A549 (cell line): ENCODE measurements at regions of chr14 and their contacts with region 1.

Region 1: GRCh38 chr14:95561001-95561412 is 26.2 kb downstream of the GLRX5 start:
- DNase-seq: peak; percentile 78 to 88
- ATAC-seq: peak; percentile 98 to 99
- H3K4me3 ChIP-seq: no peak overlapping the region
- H3K27ac ChIP-seq: no peak overlapping the region
- H3K4me1 ChIP-seq: no peaks in the 10 kb centered on the region
- CTCF ChIP-seq: peak; percentile 98
- EP300 ChIP-seq: no peak
- POLR2A ChIP-seq: no peak
- RAD21 ChIP-seq: peak; percentile 98

Region 2: GRCh38 chr14:95547631-95548327 is 13.2 kb before region 1 on chr14:
- CTCF ChIA-PET with region 1: interaction called, 47 read pairs
- POLR2A ChIA-PET with region 1: no interaction called
- DNase-seq: no peak
- ATAC-seq: no peak
- H3K4me3 ChIP-seq: no peak overlapping the region
- H3K27ac ChIP-seq: no peak overlapping the region; a peak in 1 of 6 replicates
- H3K4me1 ChIP-seq: peaks cover 16% of the 10 kb centered on the region; the same call in 2 of the 3 replicates
- CTCF ChIP-seq: no peak
- EP300 ChIP-seq: no peak
- POLR2A ChIP-seq: no peak
- RAD21 ChIP-seq: no peak

Region 3: GRCh38 chr14:95577067-95577800 is 16.2 kb after region 1 on chr14:
- CTCF ChIA-PET with region 1: interaction called, 11 read pairs
- POLR2A ChIA-PET with region 1: no interaction called
- DNase-seq: no peak
- ATAC-seq: no peak
- H3K4me3 ChIP-seq: no peak overlapping the region
- H3K27ac ChIP-seq: no peak overlapping the region
- H3K4me1 ChIP-seq: no peaks in the 10 kb centered on the region; the same call in 2 of the 3 replicates
- CTCF ChIP-seq: no peak
- EP300 ChIP-seq: no peak
- POLR2A ChIP-seq: no peak
- RAD21 ChIP-seq: no peak

Region 4: GRCh38 chr14:95597784-95598211 is 36.8 kb after region 1 on chr14:
- CTCF ChIA-PET with region 1: no interaction called
- POLR2A ChIA-PET with region 1: no interaction called
- DNase-seq: no peak
- ATAC-seq: peak in 1 of 2 experiments; percentile 25; a peak in 1 of 6 replicates
- H3K4me3 ChIP-seq: no peak overlapping the region
- H3K27ac ChIP-seq: no peak overlapping the region
- H3K4me1 ChIP-seq: no peaks in the 10 kb centered on the region
- CTCF ChIP-seq: no peak
- EP300 ChIP-seq: no peak
- POLR2A ChIP-seq: no peak
- RAD21 ChIP-seq: no peak

Region 5: DNA sequence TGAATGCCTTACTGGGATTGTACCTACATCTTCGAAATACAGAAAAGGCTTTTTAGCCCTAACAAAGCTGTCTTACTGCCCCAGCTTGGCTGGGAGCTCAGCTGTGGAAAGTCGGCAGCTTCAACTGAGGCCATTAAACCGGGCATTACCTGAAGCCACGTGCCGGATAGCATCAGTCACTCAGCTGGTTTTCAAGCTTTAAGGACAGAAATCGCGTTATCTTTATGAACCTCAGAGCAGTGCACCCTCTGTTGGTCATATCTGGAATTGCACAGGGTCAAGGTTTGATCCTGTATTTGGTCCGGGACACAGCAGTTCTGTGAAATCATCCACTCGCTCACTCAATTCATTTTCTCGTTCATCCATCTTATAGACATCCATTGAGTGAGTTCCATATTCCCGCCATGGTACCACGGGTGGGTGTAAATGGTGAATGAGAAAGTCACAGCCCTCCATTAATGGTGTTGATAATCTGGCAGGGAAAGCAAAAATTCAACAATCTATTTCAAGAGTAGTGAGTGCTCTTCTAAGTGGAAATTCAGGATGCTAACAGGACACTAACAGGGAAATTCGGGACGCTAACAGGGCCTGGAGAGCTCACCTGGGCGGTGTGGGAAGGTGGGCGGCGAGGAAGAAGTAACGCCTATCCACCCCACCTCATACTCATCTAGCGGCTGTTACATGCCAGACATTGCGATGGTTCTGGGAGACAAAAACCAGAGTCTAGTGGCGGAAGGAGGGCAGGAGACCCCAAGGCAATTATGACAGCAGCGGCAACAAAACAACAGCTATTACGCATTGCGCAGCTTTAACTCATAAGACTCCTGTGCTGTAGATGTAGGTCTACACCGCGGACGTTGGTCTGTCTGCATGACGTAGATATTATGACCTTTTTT is 213.5 kb after region 1 on chr14:
- CTCF ChIA-PET with region 1: interaction called, 29 read pairs
- POLR2A ChIA-PET with region 1: no interaction called
- DNase-seq: peak; percentile 46 to 57
- ATAC-seq: peak; percentile 70 to 80; a peak in 3 of 6 replicates
- H3K4me3 ChIP-seq: no peak overlapping the region
- H3K27ac ChIP-seq: no peak overlapping the region
- H3K4me1 ChIP-seq: no peaks in the 10 kb centered on the region
- CTCF ChIP-seq: peak; percentile 76
- EP300 ChIP-seq: no peak
- POLR2A ChIP-seq: no peak
- RAD21 ChIP-seq: peak; percentile 54 to 58; a peak in 4 of 5 replicates

Region 6: GRCh38 chr14:96001866-96002497 is 441.0 kb after region 1 on chr14:
- CTCF ChIA-PET with region 1: interaction called, 145 read pairs
- POLR2A ChIA-PET with region 1: no interaction called
- DNase-seq: no peak
- ATAC-seq: no peak
- H3K4me3 ChIP-seq: no peak overlapping the region
- H3K27ac ChIP-seq: no peak overlapping the region
- H3K4me1 ChIP-seq: no peaks in the 10 kb centered on the region
- CTCF ChIP-seq: no peak
- EP300 ChIP-seq: no peak
- POLR2A ChIP-seq: no peak
- RAD21 ChIP-seq: no peak